ENCODE measurements at regions of chr13 and their contacts with region 1.

Region 1: GRCh38 chr13:49996951-49997895 is at the start of gene TRIM13:
- H3K4me3 ChIP-seq: peak within 1 kb of the TSS; percentile 92
- H3K27ac ChIP-seq: peak within 1 kb of the TSS; percentile 97
- H3K4me1 ChIP-seq: 0 out of 2 replicates have a peak, but pooled peaks cover 3% of the 10 kb centered on the region
- CTCF ChIP-seq: no peak; the same call in 1 of the 2 replicates

Region 2: GRCh38 chr13:49464621-49465325 is 532.5 kb before region 1 on chr13:
- CTCF ChIA-PET with region 1: no interaction called
- POLR2A ChIA-PET with region 1: no interaction called
- H3K4me3 ChIP-seq: no peak overlapping the region
- H3K27ac ChIP-seq: no peak overlapping the region
- H3K4me1 ChIP-seq: no peaks in the 10 kb centered on the region
- CTCF ChIP-seq: no peak

Region 3: DNA sequence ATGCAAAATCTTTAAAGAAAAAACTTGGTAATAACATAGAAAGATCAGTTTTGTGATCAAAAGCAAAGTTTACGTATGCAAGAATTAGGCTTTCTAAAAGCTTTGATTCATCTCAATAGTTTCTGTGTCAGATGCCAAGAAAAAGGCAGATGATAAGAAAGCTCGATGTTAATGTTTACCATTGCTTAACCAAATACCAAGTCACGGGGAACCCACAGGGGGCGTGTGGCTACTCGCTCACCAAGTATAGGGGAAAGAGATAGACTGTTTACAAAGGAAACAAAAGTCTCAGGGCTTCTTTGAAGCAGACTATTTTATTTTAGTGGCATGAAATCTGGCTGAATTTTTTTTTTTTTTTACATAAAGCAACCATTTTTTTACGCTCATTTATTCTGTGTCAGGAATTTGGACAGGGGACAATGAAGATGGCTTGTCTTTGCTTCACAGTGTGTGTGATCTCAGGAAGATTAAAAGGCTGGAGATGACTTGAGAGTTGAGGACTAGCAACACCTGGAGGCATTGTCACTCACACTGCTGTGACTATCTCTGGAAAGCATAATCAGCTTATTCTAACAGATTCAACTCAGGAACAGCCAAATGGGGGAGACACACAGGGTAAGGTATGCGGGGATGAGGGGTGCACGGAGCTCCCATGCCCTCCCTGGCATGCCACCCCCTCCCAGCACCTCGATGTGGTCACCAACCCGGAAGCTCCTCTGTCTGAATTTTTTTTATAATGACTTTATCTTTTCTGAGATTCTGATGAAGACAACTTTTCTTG is 436.8 kb before region 1 on chr13:
- CTCF ChIA-PET with region 1: no interaction called
- POLR2A ChIA-PET with region 1: no interaction called
- H3K4me3 ChIP-seq: no peak overlapping the region
- H3K27ac ChIP-seq: no peak overlapping the region
- H3K4me1 ChIP-seq: peaks cover 7% of the 10 kb centered on the region; the same call in 1 of the 2 replicates
- CTCF ChIP-seq: no peak

Region 4: DNA sequence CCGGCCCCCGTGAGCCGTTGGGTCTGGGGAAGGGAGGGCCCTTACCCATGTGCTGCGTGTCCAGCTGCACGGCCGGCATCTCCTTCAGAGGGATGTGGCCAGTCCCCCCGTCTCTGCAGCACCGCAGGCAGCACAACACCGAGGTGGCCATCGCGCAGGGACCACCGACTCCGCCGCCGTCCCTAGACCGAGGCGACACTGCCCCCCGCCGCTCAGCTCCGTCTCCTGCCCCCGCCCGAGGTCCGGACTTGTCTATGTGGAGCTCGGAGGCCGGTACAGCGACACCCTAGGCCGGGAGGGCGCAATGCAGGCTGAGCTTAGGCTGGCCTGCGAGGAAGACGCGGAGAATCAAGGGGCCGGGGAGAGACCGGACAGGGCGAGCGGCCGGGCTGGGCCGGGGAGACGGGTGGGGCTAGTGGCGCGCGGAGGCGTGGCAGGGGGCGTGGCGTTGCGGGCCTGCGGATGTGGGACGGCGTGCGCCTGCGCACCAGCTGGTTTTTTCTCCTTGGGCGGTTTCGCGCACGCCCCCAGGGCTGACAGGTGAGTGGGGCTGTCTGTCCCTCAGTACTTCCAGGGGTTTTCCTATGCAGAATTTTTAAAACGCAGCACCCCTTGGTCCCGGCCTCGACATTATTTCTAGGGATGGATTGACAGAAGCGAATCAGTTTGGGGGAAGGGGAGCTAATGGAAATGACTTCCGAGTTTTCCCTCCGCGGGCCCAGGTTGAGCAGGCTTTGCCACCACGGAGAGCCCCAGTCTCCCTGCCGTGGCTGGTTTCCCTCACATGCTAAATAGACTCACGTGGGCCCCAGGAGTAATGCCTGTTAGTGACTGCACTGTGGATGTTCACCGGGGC is 60.9 kb before region 1 on chr13 and contains the start of gene SPRYD7:
- CTCF ChIA-PET with region 1: interaction called, 7 read pairs
- POLR2A ChIA-PET with region 1: interaction called, 10 read pairs
- H3K4me3 ChIP-seq: peak within 1 kb of the TSS; percentile 94
- H3K27ac ChIP-seq: peak within 1 kb of the TSS; percentile 58; the same call in 1 of the 2 replicates
- H3K4me1 ChIP-seq: peaks cover 4% of the 10 kb centered on the region; the same call in 1 of the 2 replicates
- CTCF ChIP-seq: peak; percentile 98

Region 5: DNA sequence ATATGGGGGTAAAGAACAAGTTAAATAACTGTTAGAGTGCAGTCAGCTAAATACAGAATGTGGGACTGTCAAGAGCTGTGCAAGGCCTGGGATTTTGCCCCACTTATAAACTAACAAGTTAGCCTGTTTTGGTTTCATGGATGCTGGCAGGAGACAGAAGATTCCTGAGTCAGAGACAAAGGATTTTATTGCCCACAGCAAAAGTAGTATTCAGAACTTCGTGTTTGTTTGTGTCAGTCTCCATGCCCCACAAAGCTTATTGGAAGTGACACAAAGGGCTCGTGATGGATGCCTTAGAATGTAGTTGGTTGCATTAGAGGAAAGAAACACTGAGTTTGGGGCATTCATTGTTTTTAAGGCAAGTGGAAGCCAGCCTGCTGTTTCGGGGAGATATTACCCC is 38.9 kb before region 1 on chr13:
- CTCF ChIA-PET with region 1: no interaction called
- POLR2A ChIA-PET with region 1: interaction called, 13 read pairs
- H3K4me3 ChIP-seq: no peak overlapping the region
- H3K27ac ChIP-seq: no peak overlapping the region
- H3K4me1 ChIP-seq: no peaks in the 10 kb centered on the region
- CTCF ChIP-seq: no peak

Measured in HEK293 (cell line).